ENCODE measurements at regions of chr12 and their contacts with region 1.

Region 1: DNA sequence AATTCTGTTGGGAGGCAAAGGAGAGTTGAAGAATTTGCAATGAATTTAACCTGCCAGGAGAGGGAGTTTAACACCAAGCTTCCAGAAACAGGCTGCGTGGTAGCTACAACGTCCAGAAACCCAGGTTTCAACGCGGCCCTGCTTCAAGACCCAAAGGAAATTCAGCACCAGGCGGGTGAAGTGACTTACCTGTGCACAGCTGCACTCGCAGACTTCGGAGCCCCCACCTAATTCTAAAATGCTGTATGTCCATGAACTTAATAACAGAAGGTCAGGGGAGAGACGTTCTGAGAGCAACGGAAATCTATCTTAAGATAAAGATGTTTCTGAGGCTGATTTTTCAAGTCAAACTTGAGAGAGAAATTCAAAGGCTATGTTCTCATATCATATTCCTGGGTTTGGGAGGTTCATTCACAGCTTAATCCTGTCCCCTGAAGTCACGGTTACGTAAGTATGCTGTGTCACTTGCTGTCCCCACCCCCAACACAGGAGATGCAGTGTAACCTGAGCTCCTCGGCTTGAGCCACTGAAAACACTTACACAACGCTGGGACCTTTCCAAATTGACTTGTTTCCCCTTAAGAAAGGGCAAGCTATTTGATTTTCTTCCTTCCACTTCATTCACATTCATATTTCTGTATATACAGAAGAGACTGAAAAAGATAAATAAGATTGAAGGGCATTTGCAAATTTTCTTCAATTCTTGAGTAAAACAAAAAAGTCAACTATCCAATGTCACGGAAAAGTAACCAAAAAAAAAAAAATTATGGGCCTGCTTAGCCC is 22.7 kb downstream of the CLIP1 start:
- DNase-seq: peak; percentile 72

Region 2: DNA sequence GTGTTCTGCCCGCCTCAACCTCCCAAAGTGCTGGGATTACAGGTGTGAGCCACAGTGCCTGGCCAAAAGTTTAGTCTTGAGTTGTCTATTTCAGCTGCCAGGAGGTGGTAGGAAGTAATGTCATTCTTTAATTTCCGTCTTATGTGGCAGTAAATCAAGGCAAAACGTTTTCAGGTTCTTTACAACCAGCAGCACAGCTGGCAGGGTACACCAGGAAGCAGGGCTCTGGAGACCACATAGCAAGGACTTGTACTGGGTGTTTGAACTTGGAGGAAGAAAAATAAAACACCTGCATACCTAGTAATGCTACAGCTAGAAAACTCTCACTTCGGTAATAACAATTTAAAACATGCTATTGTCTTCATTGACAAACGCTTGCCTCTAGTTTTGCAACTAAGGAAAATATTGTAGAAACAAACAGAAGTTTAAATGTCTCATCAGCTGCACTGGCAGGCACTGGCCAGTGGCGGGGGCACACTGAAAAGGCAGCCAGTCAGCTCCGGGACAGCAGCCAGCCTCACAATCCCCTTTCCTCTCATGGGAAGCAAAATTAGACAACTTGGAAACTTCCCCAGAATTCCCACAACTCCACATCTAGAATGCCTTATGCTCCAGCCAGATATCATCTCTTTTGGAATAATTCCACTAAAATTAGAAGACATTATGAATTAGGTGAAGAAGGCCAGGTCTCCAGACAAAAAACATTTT is 49.5 kb before region 1 on chr12:
- CTCF ChIA-PET with region 1: no interaction called
- POLR2A ChIA-PET with region 1: no interaction called
- DNase-seq: no peak

Region 3: GRCh38 chr12:122368361-122369073 is 31.3 kb before region 1 on chr12:
- CTCF ChIA-PET with region 1: interaction called, 3 read pairs
- POLR2A ChIA-PET with region 1: interaction called, 14 read pairs
- DNase-seq: peak; percentile 39

Region 4: GRCh38 chr12:122413516-122414404 is 14.0 kb after region 1 on chr12:
- CTCF ChIA-PET with region 1: interaction called, 9 read pairs
- POLR2A ChIA-PET with region 1: interaction called, 16 read pairs
- DNase-seq: no peak

Region 5: DNA sequence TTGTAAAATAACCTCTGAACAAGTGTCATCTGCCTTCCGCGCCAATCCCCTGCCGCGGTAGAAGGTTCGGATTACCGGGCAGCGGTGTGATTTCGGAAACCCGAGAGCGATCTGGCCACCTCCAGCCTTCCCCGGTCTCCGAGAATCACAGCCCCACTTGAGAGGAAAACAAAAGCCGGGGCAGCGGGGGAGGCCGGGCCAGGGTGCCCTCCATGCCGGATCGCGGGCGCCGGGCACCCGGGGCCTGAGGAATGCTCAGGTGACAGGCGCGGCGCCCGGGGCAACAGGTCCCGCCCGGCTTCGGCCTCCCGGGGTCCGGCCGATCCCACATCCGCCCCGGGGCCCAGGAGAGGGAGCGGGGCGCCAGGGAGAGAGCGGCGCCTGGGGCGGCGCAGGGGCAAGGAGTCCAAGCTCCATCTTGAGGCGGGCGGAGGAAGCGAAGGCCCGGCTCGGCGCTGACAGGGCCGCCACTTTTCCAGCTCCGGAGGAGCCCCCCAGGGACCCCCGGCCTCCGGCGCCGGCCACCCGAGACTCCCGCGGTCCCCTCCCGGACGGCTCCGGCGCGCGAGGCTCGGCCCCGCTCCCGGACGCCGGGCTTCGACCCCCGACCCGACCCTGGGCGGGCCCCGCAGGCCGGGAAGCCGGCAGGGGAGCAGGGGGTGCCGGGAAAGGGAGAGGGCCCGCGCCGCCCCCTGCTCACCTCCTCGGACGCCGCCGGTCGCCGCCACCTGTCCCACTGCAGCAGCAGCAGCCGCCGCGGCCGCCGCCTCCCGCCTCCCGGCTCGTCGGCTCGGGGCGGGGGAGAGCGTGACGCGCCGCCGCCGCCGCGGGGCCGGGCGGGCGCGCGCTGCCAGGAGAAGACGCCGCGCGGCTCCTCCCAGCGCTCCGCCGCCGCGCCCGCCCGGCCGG is 22.3 kb after region 1 on chr12 and contains the start of gene CLIP1:
- CTCF ChIA-PET with region 1: interaction called, 9 read pairs
- POLR2A ChIA-PET with region 1: interaction called, 60 read pairs
- DNase-seq: peak; percentile 66

Region 6: DNA sequence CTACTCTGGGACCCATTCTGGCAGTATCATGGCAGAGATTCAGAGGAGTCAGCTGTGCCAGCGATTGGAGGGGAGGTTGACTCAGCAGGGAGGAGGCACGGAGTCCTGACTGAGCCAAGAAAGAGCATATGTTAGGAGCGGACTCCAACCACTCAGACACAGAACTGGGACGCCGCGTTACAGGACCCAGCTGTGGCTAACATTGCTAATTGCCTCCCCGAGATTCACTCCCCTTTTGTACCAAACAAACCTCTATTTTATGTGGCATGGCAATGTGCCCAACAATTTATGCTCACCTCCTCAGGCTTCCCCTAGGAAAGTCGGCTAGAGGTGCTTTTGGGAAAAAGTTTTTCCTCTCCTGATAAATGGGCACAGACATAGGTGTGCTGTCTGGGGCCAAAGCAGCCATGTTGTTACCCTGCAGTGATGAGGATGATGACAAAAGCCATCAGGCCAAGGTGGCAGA is 37.9 kb after region 1 on chr12:
- CTCF ChIA-PET with region 1: no interaction called
- POLR2A ChIA-PET with region 1: interaction called, 10 read pairs
- DNase-seq: no peak

Region 7: DNA sequence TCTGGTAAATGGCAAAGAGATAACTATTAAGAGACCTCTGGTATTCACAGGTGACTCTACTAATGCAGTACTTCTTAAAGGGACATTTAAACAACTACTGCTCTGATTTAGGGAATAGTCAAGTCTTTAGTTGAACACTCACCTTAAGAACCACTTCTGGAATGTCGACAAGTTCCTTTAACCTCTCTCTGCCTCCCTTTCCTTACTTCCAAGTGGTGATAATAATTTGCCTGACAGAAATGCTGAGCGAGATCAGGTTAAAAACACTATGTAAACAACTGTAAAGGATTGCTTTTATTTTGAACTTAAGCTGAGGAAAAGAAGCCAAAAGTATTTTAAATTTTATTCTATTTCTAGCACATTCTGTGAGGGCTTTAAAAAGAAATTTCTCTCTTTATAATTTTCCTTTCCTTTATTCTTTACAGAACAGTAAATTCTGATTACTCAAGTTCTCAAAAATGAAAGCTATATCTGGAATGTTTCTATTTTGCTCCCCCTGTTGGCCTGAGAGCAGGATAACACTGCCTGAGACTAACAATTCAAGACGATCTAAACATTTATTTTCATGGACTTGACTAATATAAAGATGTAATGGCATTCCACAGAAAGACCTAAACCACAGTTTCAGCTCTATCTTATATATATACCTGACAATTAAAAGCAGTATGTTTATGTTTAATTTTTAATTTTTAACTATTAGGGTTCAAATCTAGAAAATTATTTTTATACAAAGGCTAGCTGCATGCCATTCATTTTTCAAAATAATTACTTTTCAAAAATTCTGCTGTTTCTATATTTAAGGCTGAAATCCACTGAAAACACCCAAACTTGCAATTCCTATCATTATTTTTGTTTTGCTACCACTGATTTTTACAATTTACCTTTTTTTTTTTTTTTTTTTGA is 71.8 kb after region 1 on chr12:
- CTCF ChIA-PET with region 1: interaction called, 23 read pairs
- POLR2A ChIA-PET with region 1: interaction called, 27 read pairs
- DNase-seq: peak; percentile 40

Region 8: DNA sequence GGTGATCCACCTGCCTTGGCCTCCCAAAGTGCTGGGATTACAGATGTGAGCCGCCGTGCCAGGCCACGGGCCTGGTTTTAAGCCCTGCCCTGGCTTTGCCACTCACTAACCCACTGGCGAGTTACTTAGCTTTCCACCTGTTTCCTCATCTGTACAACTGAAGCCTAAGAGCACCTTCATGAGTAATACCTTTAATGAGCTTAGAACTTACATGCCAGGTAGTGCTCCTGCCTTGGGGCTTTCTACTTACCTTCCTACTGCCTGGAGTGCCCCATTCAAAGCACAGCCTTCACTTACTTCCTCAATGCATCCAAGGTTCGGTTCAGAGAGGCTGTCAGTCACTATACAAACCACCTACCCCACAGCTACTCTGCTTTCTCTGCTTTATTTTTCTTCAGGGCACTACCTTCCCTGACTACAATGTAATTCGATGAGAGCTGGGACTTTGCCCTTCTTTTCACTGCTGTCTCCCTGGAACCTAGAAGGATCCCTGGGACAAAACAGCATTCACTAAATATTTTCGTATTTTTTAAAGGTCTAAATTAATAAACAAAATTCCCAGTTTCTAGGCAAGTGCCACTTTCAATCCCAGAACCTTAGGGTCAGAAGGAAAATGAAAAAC is 87.1 kb after region 1 on chr12:
- CTCF ChIA-PET with region 1: no interaction called
- POLR2A ChIA-PET with region 1: no interaction called
- DNase-seq: no peak

Region 9: DNA sequence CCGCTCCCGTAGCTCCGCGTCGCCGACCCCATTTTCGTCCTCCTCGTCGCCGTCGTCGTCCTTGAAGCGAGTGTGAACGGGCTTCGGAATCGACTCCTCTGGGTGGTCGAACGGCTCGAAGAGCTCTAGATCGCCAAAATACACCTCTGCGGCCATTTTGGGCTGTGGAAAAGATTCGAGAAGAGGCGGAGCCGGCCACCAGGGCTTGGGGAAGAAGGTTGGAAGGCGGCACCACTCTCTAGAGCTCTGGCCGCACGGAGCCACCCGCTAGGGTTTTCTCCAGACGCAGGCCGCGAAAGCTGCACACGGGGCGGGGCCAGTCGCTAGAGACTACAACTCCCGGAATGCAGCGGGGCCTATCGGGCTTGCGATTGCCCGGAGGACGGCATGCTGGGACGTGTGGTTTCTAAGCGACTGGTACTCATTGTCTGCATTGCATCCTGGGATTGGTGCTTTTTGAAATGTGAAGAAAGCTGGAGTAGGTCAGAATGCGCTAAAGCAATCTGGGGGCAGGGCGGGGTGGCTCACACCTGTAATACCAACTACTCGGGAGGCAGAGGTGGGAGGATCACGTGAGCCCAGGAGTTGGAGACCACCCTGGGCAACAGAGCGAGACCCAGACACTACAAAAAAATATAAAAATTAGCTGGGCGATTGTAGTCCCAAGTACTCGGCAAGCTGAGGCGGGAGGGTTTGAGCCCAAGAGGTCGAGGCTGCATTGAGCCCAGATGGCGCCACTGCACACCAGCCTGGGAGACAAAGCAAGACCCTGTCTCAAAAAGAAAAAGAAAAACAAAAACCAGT is 101.1 kb after region 1 on chr12 and contains the start of gene ZCCHC8:
- CTCF ChIA-PET with region 1: interaction called, 3 read pairs
- POLR2A ChIA-PET with region 1: interaction called, 47 read pairs
- DNase-seq: peak; percentile 88

Region 10: DNA sequence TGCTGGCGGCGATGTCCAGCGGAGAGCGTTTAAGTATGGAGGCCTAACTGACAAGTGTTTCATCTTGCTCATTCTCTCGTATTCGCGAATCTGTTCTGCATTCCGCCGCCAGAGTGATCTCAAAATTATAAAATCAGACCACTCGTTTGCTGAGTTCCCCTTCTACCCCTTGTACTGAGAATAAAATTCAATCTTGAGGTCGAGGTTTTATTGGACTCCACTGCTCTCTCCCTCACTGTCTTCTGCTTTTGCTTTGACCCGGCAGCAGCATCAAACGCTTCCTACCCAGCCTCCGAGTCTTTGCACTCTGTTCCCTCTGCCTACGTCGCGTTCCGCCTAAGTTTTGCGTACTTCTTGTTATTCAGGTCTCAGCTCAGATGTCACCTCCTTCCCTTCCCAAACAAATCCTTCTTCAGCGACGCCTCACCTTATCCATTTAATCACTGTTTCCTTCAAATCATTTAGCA is 127.7 kb after region 1 on chr12:
- CTCF ChIA-PET with region 1: no interaction called
- POLR2A ChIA-PET with region 1: no interaction called
- DNase-seq: peak; percentile 19

Region 11: DNA sequence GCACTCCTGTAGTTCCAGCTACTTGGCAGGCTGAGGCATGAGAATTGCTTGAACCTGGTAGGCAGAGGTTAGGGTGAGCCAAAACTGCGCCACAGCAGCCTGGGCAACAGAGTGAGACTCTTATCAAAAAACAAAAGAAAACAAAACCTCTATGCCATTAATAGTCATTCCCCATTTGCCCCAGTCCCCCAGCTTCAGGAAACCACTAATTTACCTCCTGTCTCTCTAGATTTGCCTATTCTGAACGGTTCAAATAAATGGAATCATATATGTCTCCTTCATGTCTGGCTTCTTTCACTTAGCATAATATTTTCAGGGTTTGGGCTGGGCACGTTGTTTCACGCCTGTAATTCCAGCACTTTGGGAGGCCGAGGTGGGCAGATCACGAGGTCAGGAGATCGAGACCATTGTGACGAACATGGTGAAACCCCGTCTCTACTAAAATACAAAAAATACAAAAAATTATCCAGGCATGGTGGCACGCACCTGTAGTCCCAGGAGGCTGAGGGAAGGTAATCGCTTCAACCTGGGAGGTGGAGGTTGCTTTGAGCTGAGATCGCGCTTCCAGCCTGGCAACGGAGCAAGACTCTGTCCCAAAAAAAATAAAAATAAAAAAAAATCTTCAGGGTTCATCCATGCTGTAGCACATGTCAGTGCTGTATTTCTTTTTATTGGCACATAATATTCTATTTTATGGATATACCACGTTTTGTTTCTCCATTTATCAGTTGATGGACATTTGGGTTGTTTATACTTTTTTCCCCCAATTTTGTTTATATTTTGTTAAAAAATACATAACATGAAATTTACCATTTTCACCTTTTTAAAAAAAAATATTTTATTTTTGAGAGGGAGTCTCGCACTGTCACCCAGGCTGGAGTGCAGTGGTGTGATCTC is 159.2 kb after region 1 on chr12:
- CTCF ChIA-PET with region 1: no interaction called
- POLR2A ChIA-PET with region 1: no interaction called
- DNase-seq: no peak